ENCODE measurements at regions of chr2 and their contacts with region 1.

Region 1: DNA sequence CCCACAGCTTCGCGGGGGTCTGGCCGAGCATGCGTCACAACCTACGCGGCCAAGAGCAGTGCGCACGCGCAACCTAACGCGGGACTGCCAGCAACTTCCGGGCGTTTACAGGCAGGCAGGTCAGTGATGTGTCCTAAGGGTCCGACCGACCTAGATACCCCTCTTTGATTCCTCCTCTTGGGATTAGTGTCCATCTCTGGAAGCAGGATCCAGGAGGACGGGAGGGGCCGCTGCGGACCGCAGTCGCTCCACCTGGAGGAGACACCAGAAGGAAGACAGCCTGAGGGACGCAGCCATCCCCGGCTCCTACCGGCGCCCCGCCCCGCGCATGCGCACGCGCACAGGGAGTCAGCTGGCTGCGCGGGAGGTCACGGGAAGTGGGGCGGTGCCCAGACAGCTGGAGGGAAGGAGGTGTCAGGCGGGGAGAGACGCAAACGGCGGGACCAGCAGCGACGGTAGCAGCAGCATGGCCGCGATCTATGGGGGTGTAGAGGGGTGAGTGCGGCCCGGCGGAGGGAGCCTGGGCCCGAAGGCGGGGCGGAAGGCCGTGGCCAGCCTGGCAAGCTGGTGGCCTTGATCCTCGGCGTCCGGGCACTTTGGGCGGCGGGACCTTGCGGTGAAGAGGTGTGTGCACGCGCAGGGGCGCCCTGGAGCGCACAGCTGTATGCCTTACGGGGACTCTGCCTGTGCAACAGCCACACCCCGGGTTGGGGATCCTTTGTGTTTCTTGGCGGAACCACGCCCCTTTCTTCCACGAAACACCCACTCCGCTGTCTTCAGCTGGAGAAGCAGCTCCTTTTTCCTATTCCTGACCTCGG is at the start of gene NAGK:
- DNase-seq: peak; percentile 86 to 98
- H3K4me3 ChIP-seq: peak within 1 kb of the TSS; percentile 60 to 96 (median 82)
- H3K27ac ChIP-seq: peak within 1 kb of the TSS; percentile 78
- H3K4me1 ChIP-seq: peaks cover 0 to 6% (median 1%) of the 10 kb centered on the region in 4 experiments; a peak in 4 of 7 replicates
- H3K27me3 ChIP-seq: no peaks in the 10 kb centered on the region
- CTCF ChIP-seq: no peak
- EP300 ChIP-seq: peak in 1 of 2 experiments; percentile 3; a peak in 1 of 3 replicates
- POLR2A ChIP-seq: peak; percentile 85 to 98
- RAD21 ChIP-seq: no peak
- total RNA-seq, gene NAGK: 59.9 and 62.2 TPM in 2 replicates

Region 2: DNA sequence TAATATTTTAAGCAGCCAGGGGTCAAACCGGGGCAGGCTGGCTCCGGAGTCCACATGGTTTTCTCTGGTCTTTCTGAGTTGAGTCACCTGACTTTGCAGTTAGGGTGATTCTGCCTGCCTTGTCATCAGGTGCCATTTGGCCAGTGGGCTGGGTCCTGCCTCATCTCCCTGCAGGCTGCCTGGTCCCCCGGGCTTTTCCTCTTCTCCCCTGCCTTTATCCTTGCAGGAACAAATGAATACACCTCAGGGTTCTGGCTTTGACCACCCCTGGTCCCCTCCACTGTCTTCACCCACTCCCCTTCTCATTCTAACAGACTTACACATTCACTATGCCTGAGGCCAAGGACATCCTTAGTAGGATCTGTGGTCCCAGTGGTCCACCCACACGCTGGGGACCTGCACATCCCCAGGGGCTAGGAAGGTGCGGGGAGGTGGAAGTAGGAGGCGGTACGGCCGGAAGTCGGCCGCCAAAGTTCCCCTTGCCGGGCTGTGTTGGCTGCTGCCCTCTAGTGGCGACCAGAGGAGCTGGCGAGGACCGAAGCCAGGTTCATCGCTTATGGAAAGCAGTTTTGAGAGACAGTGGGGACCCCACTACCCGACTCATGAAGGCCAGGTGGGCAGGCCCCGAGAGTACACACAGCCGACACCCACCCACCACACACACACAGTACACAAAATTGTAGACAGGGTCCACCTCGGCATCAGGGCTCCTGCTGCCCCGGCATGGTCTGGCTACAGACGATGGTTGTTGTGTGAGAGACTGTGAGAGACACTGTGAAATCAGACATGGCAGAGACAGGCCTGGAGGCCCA is 67.4 kb before region 1 on chr2:
- CTCF ChIA-PET with region 1: interaction called, 14 read pairs
- POLR2A ChIA-PET with region 1: interaction called, 5 read pairs
- DNase-seq: peak in 1 of 2 experiments; percentile 86
- H3K4me3 ChIP-seq: peak overlapping the region in 2 of 4 experiments; percentile 20 to 46; a peak in 3 of 8 replicates
- H3K27ac ChIP-seq: no peak overlapping the region
- H3K4me1 ChIP-seq: peaks cover 3 to 11% (median 7%) of the 10 kb centered on the region in 4 experiments; a peak in 5 of 7 replicates
- H3K27me3 ChIP-seq: peaks cover 0 to 7% (median 0%) of the 10 kb centered on the region in 4 experiments; a peak in 4 of 7 replicates
- CTCF ChIP-seq: peak; percentile 88 to 94 (median 90)
- EP300 ChIP-seq: no peak
- POLR2A ChIP-seq: no peak
- RAD21 ChIP-seq: peak; percentile 31 to 55; a peak in 3 of 4 replicates

Region 3: DNA sequence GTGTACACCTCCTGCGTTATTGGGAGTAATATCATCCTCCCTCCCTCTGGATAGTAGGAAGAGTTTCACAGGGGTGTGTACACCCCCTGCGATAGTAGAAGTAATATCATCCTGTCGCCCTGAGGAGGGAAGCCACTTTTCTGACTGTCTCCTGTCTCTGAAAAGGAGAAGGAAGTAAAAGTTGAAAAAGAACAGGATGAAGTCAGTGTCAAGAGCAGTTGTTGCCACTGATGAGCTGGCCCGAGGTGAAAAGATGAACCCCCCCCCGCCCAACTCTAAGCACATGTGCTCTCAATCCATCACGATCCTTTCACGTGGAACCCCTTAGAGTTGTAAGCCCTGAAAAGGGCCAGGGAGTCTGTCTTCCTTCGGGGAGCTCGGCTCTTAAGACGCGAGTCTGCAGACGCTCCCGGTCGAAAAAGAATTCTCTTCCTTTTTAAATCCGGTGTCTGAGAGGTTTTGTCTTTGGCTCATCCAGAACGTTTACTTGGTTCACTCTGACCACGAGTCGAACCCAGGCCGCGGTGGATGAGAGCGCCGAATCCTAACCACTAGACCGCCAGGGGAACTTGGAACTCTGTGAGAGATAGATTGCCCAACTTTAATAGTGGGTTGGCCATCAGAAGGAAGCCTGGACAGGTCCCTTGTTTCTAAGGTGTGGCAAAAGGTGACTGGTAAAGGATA is 22.4 kb before region 1 on chr2:
- CTCF ChIA-PET with region 1: interaction called, 11 read pairs
- POLR2A ChIA-PET with region 1: interaction called, 4 read pairs
- DNase-seq: no peak
- H3K4me3 ChIP-seq: no peak overlapping the region
- H3K27ac ChIP-seq: no peak overlapping the region
- H3K4me1 ChIP-seq: no peaks in the 10 kb centered on the region
- H3K27me3 ChIP-seq: no peaks in the 10 kb centered on the region
- CTCF ChIP-seq: no peak
- EP300 ChIP-seq: no peak
- POLR2A ChIP-seq: no peak
- RAD21 ChIP-seq: no peak

Region 4: GRCh38 chr2:71130113-71130904 is 61.9 kb after region 1 on chr2 and contains the starts of genes MCEE and MPHOSPH10:
- CTCF ChIA-PET with region 1: interaction called, 6 read pairs
- POLR2A ChIA-PET with region 1: interaction called, 10 read pairs
- DNase-seq: peak; percentile 83 to 94
- H3K4me3 ChIP-seq: peak within 1 kb of the TSS; percentile 83 to 98 (median 92)
- H3K27ac ChIP-seq: peak within 1 kb of the TSS; percentile 80
- H3K4me1 ChIP-seq: no peaks in the 10 kb centered on the region
- H3K27me3 ChIP-seq: no peaks in the 10 kb centered on the region
- CTCF ChIP-seq: peak in 1 of 3 experiments; percentile 0; a peak in 1 of 4 replicates
- EP300 ChIP-seq: no peak
- POLR2A ChIP-seq: peak; percentile 79 to 88
- RAD21 ChIP-seq: peak in 1 of 2 experiments; percentile 9; a peak in 2 of 4 replicates
- total RNA-seq, gene MCEE: 14.1 and 15.5 TPM in 2 replicates
- total RNA-seq, gene MPHOSPH10: 39.1 and 42.8 TPM in 2 replicates

Measured in H1 (cell line).